Left colon (tissue), 2 donors: ENCODE measurements at regions of chr1 and their contacts with region 1.

Region 1: DNA sequence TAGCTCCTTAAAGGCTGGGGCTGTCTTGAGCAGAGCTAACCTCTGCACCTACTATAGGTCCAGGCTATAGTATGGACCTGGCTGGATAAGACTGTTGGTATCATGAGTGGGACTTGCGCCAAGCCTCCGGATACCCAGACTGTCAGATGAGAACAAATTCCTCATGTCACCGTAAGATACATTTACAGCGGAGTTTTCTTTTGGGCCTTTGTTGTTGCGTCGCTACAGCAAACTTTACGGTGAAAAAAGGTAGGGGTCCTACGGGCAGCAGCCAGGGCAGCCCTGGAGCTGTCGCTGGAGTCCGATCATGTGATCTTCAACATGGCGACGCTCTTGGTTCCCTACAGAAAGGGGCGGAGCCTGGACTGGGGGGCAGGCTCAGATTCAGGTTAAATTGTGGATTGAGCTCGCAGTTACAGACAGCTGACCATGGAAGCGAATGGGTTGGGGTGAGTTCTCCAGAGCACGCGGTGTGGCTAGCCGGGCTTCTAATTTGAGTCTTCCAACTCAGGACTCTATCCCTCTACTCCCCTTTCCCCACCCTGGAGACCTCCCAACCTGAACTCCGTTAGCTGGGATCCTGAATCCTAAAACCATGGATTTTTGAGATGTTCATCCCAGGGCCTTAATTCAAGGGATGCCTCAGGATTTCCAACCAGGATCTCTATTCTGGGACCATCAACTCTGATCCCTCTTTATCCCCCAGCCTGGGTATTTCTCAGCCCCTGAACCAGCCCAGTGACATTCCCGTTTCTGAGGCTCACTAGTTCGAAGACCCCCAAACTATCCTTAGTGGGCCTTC is at the start of gene UROD:
- DNase-seq: peak; percentile 93 to 94
- ATAC-seq: peak; percentile 77
- total RNA-seq, gene UROD: 45.4 to 46.4 TPM

Region 2: GRCh38 chr1:44799770-44800584 is 212.1 kb before region 1 on chr1 and contains the start of gene PLK3:
- intact Hi-C with region 1: loop called in 1 of 2 experiments (anchors 10 kb)
- DNase-seq: peak; percentile 98 to 99
- ATAC-seq: peak; percentile 94
- total RNA-seq, gene PLK3: 8.1 to 10.4 TPM

Region 3: DNA sequence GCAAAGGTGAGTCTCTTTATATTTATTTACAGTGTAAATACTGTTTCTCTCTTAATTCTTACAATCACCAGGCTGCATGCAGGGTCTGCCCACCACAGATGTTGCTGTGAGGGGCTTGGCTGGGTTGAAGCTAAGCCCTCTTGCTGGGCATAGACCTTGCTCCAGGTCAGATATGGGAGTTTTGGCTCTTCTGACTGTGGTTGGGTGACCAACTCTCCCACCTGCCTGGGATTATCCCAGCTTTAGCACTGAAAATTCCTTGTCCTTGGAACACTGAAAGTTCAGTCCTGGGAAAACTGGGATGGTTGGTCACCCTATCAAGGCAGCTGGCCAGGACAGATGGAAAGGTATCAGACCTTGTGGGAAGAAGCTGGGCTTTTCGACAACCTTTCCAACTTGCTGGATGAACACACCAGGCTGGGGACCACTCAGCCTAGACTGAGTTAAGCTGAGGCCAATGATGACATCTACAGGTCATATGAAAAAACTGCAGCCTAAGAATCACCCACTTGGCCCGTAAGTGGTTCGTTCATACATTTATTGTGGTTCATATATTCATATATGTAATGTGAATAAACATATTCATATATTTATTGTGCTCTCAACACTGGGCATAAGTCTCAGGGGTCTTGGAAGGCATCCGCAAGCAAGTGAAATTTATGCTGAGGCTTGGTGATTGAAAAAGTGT is 288.1 kb after region 1 on chr1:
- intact Hi-C with region 1: loop called (anchors 2 to 5 kb)
- DNase-seq: peak in 1 of 2 donors; percentile 31
- ATAC-seq: no peak

Region 4: GRCh38 chr1:45490626-45491486 is 478.8 kb after region 1 on chr1 and contains the start of gene TESK2:
- intact Hi-C with region 1: loop called in 1 of 2 experiments (anchors 5 kb)
- DNase-seq: peak; percentile 96 to 99
- ATAC-seq: peak; percentile 90
- total RNA-seq, gene TESK2: 8.4 to 17.5 TPM